ENCODE measurements at regions of chr17 and their contacts with region 1.

Region 1: DNA sequence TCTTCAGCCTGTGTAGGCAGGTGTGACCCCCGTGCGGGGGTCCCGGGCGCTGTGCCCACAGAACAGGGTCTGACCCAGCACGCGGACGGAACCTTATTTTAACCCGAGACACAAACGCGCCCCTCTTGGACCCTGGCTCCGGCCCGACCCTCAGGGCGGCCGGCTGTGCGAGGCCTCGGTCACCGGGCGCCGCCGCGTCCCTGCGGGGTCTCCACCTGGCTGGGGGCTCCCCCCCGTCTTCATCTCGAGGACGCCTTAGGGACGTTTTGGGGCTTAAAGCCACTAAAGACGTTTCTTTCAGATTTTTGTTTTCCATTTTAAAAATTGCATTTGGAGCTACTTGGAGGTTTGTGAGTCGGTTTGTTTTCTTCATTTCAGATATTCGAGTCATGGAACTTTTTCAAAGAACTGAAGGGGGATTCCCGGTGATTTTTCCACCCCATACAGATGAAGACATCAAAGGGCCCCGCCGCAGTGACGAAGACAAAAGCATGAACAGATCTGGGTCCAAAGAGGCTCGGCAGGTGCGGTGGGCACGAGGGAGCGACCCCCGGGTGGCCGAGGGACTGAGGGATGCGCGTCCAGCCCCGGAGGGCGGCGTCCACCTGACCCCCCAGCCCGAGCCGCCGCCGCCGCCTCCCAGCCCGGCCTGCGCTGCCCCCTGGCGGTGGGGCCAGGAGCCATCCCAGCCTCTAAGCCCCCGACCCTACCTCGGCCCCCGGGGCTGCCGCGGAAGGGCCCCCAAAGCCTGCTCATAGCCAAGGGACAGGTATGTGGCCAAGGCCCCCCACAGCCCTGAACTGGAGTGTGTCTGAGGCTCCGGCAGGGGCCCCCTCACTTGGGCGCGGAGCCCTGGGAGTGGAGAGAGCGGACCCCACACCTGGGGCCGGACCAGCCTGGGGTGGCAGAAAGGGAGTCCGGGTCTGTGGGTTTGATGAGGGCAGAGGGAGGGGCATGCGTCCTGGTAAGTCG is 3.8 kb upstream of the CD7 start:
- DNase-seq: no peak
- ATAC-seq: peak; percentile 35

Region 2: DNA sequence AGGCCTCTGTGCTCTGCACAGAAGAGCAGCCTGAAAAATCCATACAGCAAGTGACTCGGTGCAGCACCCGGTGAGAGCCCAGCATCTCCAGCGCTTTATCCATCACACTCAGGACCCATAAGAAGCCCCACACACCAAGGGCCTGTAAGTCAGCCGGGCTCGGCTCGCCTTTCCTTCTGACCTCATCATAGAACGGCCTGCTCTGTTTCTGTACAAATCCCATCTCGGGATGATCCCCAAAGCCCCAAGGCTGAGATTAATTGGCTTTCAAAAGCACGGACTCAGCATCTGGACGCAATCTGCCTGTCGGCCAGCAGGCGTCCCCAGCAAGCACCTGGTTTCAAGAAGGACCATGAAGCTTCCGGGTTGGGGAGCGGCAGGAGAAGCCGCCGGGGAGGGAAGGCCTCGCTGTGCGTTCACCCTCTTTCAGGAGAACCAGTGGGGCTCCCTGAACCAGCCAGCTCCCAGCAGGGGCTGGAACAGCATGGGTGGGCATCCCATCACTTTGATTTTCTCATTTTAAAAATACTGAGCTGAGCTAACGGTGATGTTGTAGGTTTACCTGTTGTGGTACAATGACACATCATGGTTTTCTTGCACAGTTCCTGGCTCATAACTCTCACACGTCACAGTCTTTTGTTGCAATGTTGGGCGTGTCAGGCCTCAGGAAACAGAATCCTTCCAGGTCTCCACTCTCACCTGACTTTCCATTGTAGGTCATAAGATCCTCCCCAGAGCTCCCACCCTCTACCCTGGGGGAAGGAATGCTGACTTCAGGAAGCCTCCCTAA is 115.3 kb before region 1 on chr17:
- intact Hi-C with region 1: loop called (anchors 10 kb)
- DNase-seq: peak; percentile 88
- ATAC-seq: peak; percentile 90

Region 3: DNA sequence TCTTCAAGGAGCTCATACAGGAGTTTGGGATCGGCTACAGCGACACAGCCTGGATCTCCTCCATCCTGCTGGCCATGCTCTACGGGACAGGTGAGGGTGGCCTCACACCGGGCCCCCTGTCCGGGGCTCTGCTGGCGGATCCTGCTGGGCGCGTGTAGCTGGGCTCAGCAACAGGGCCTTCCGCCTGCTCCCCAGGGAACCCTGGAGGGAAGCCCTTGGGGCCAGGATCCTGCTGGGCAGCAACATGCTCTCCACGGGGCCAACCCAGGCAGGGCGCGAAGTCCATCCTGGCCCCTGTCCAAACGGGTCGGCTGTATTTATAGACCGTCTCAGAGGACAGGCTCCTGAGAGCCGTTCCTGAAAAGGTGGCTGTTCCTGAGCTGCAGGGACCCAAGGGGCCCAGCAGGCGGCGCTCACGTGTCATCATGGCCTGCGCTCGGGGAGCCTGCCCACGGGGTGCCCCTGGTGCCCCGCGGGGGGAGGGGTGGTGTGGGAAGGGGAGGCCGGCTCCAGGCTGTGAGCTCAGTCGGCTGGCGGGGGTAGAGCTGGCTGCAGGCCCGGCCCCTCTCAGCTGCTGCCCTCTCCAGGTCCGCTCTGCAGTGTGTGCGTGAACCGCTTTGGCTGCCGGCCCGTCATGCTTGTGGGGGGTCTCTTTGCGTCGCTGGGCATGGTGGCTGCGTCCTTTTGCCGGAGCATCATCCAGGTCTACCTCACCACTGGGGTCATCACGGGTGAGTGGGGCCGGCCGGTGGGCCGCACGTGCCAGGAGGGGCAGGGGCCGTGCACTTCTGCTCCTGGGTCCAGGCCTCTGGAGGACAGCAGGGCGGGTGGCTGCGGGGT is 84.9 kb before region 1 on chr17:
- intact Hi-C with region 1: loop called (anchors 5 kb)
- DNase-seq: peak; percentile 83
- ATAC-seq: peak; percentile 3